Activated naive CD4-positive, alpha-beta T cell treated with anti-CD3 and anti-CD28 coated beads for 36 hours (primary cell): ENCODE measurements at regions of chr14 and their contacts with region 1.

Region 1: DNA sequence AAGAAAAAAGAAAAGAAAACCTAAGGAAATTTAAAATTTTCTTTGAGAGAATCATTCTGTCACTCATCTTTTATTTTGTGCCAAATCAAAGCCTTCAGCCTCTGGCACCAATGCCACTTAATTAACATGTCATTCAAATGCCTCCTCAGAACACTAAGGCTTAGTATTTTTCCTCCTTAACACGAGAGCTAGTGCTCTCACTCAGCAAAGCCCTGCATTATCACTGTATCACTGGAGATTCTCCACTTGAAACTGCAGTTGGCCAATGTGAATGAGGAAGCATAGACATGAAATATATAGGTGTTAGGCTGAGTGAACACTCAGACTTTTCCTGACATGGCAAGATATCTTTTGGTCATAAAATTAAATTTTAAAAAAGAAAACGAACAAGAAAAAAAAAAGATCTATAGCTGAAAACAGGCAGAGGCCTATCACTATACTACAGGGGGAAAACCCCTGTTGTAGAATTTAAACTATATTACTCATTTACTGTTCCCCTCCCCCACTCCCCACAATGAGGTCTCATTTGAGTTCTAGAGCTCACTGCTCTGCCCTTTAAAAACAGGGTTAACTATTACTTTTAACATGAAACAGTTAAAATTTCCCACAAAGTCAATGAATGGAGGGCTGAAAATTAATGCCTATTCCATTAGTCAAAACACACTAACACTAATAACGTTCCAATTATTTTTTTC is 5.1 kb downstream of the MBIP start:
- DNase-seq: peak; percentile 80
- H3K4me3 Mint-ChIP-seq: peak overlapping the region; percentile 43
- H3K27ac Mint-ChIP-seq: peak overlapping the region; percentile 89
- H3K4me1 Mint-ChIP-seq: peaks cover 40% of the 10 kb centered on the region
- H3K27me3 Mint-ChIP-seq: no peaks in the 10 kb centered on the region

Region 2: DNA sequence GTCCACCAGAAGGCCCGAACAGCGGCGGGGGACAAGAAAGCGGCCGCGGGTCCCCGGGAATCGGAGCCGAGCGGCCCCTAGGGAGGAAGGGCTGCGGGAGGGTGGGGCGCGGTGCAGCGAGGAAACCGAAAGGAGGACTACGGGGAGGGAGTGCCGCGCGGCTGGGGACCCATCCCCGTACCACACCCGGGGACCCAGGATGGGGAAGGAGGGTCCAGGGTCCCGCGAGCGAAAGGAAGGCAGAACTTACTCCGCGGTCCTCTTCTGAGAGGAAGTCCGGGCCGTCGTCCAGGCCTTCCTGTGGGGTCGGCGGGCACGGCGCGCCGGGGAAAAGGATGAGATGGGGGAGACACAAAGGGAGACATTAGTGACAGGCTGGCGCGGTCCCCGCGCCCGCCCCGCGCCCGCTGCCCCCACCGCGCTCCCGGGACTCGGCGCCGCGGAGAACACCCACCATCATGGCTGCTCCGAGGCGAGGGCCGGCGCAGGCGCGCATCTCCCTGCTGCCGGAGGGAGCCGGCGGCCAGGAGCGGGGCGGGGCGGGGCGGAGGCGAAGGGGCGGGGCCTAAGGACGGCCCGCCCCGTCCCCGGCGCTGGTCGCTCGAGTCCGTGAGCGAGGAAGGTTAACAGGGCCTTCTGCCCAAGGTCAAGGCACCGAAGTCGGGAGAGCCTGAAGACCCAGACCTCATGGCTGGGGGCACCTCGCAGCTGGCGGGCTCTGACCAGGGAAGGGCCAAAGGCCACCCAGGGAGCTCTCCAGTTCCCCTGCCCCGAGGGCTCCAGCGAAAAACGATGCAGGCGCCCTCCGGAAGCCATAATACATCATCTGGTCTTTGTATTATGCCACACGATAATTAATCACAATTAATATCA is 1685.4 kb before region 1 on chr14 and contains the start of gene SNX6:
- CTCF ChIA-PET with region 1: no interaction called
- intact Hi-C with region 1: loop called (anchors 5 kb)
- DNase-seq: peak; percentile 85
- H3K4me3 Mint-ChIP-seq: peak within 1 kb of the TSS; percentile 93
- H3K27ac Mint-ChIP-seq: peak within 1 kb of the TSS; percentile 89
- H3K4me1 Mint-ChIP-seq: peaks cover 20% of the 10 kb centered on the region
- H3K27me3 Mint-ChIP-seq: no peaks in the 10 kb centered on the region
- total RNA-seq, gene SNX6: 73.9 to 74.3 TPM

Region 3: GRCh38 chr14:35687335-35687939 is 627.9 kb before region 1 on chr14:
- CTCF ChIA-PET with region 1: no interaction called
- intact Hi-C with region 1: loop called (anchors 1 kb)
- DNase-seq: peak; percentile 63
- H3K4me3 Mint-ChIP-seq: no peak overlapping the region
- H3K27ac Mint-ChIP-seq: no peak overlapping the region
- H3K4me1 Mint-ChIP-seq: peaks cover 16% of the 10 kb centered on the region
- H3K27me3 Mint-ChIP-seq: no peaks in the 10 kb centered on the region

Region 4: DNA sequence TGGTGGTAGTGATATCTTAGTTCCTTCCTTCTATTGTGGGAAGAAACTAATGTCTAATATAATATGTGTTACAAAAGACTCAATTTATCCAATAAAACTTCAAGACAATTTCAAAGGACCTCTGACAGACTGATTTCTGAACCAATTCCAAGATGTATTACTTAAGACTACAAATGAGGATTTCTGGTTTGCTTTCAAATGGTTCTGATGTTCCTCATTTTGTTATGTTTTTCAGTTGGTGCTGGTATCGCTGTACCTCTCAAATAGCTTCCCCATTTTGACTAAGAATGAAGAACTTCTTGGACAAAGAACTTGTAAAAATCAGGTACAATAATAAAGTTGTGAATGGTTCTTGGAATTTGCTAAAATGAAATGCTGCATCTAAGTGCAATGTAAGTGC is 24.5 kb after region 1 on chr14:
- CTCF ChIA-PET with region 1: no interaction called
- intact Hi-C with region 1: loop called (anchors 1 kb)
- DNase-seq: no peak
- H3K4me3 Mint-ChIP-seq: no peak overlapping the region
- H3K27ac Mint-ChIP-seq: peak overlapping the region; percentile 6
- H3K4me1 Mint-ChIP-seq: peaks cover 14% of the 10 kb centered on the region
- H3K27me3 Mint-ChIP-seq: peaks cover 25% of the 10 kb centered on the region

Region 5: GRCh38 chr14:36398463-36399260 is 83.4 kb after region 1 on chr14:
- CTCF ChIA-PET with region 1: no interaction called
- intact Hi-C with region 1: no loop called
- DNase-seq: no peak
- H3K4me3 Mint-ChIP-seq: no peak overlapping the region
- H3K27ac Mint-ChIP-seq: no peak overlapping the region
- H3K4me1 Mint-ChIP-seq: no peaks in the 10 kb centered on the region
- H3K27me3 Mint-ChIP-seq: peaks cover 7% of the 10 kb centered on the region

Region 6: GRCh38 chr14:36505181-36505815 is 190.0 kb after region 1 on chr14:
- CTCF ChIA-PET with region 1: no interaction called
- intact Hi-C with region 1: loop called (anchors 5 kb)
- DNase-seq: no peak
- H3K4me3 Mint-ChIP-seq: peak overlapping the region; percentile 11
- H3K27ac Mint-ChIP-seq: no peak overlapping the region
- H3K4me1 Mint-ChIP-seq: peaks cover 26% of the 10 kb centered on the region
- H3K27me3 Mint-ChIP-seq: peaks cover 71% of the 10 kb centered on the region